HepG2 (cell line): ENCODE measurements at regions of chr11 and their contacts with region 1.

Region 1: DNA sequence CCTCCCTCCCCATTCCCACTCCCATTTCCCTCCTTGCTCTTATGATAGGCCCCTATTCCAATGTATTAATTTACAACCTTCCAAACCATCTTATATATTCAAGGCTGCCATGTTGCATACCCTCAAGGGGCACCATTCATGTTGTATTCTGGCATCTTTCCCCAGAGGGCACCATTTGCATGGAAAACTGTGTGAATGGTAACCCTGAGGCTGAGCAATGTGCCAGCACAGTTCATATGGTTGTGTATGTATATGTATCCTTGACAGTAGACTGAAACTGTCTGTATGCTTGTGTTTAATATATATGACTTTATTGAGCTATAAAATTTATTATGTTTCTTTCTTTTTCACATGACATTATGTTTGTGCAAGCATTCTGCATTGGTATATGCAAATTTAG is 7.3 kb downstream of the RASSF10 start:
- DNase-seq: no peak
- ATAC-seq: no peak
- H3K4me3 ChIP-seq: no peak overlapping the region
- H3K27ac ChIP-seq: no peak overlapping the region
- H3K4me1 ChIP-seq: peaks cover 32% of the 10 kb centered on the region
- H3K27me3 ChIP-seq: no peaks in the 10 kb centered on the region; a peak in 1 of 5 replicates
- CTCF ChIP-seq: peak; percentile 28; the same call in 1 of the 2 replicates
- EP300 ChIP-seq: no peak
- POLR2A ChIP-seq: no peak
- RAD21 ChIP-seq: no peak

Region 2: GRCh38 chr11:12981676-12982531 is 34.5 kb before region 1 on chr11:
- CTCF ChIA-PET with region 1: no interaction called
- POLR2A ChIA-PET with region 1: no interaction called
- in situ Hi-C with region 1: no loop called
- intact Hi-C with region 1: loop called (anchors 1 kb)
- DNase-seq: peak; percentile 3
- ATAC-seq: peak; percentile 76
- H3K4me3 ChIP-seq: no peak overlapping the region
- H3K27ac ChIP-seq: no peak overlapping the region
- H3K4me1 ChIP-seq: peaks cover 34% of the 10 kb centered on the region
- H3K27me3 ChIP-seq: no peaks in the 10 kb centered on the region
- CTCF ChIP-seq: no peak
- EP300 ChIP-seq: no peak
- POLR2A ChIP-seq: no peak
- RAD21 ChIP-seq: no peak

Region 3: GRCh38 chr11:13030857-13031256 is 14.4 kb after region 1 on chr11:
- CTCF ChIA-PET with region 1: no interaction called
- POLR2A ChIA-PET with region 1: no interaction called
- in situ Hi-C with region 1: no loop called
- intact Hi-C with region 1: no loop called
- DNase-seq: peak; percentile 14
- ATAC-seq: peak; percentile 31; the same call in 1 of the 3 replicates
- H3K4me3 ChIP-seq: no peak overlapping the region
- H3K27ac ChIP-seq: no peak overlapping the region
- H3K4me1 ChIP-seq: peaks cover 16% of the 10 kb centered on the region
- H3K27me3 ChIP-seq: peaks cover 0 to 27% of the 10 kb centered on the region in 2 experiments; a peak in 4 of 5 replicates
- CTCF ChIP-seq: no peak
- EP300 ChIP-seq: no peak
- POLR2A ChIP-seq: no peak
- RAD21 ChIP-seq: no peak

Region 4: GRCh38 chr11:13061284-13061990 is 45.0 kb after region 1 on chr11:
- CTCF ChIA-PET with region 1: no interaction called
- POLR2A ChIA-PET with region 1: no interaction called
- in situ Hi-C with region 1: no loop called
- intact Hi-C with region 1: no loop called
- DNase-seq: no peak
- ATAC-seq: no peak
- H3K4me3 ChIP-seq: no peak overlapping the region
- H3K27ac ChIP-seq: no peak overlapping the region
- H3K4me1 ChIP-seq: peaks cover 15% of the 10 kb centered on the region
- H3K27me3 ChIP-seq: no peaks in the 10 kb centered on the region; a peak in 1 of 5 replicates
- CTCF ChIP-seq: no peak
- EP300 ChIP-seq: no peak
- POLR2A ChIP-seq: no peak
- RAD21 ChIP-seq: no peak

Region 5: GRCh38 chr11:13261591-13262061 is 245.2 kb after region 1 on chr11:
- CTCF ChIA-PET with region 1: no interaction called
- POLR2A ChIA-PET with region 1: no interaction called
- in situ Hi-C with region 1: no loop called
- intact Hi-C with region 1: no loop called
- DNase-seq: no peak
- ATAC-seq: no peak
- H3K4me3 ChIP-seq: no peak overlapping the region
- H3K27ac ChIP-seq: no peak overlapping the region
- H3K4me1 ChIP-seq: peaks cover 10% of the 10 kb centered on the region; the same call in 1 of the 2 replicates
- H3K27me3 ChIP-seq: peaks cover 1 to 18% of the 10 kb centered on the region in 2 experiments; a peak in 4 of 5 replicates
- CTCF ChIP-seq: no peak
- EP300 ChIP-seq: no peak
- POLR2A ChIP-seq: no peak
- RAD21 ChIP-seq: no peak